CD4-positive, alpha-beta T cell (primary cell): ENCODE measurements at regions of chr17 and their contacts with region 1.

Region 1: GRCh38 chr17:38799378-38800236 is at the start of gene PIP4K2B:
- DNase-seq: peak; percentile 66 to 93 (median 77)
- ATAC-seq: peak; percentile 69
- H3K4me3 ChIP-seq: peak within 1 kb of the TSS; percentile 65
- H3K4me3 Mint-ChIP-seq: peak within 1 kb of the TSS; percentile 92
- H3K27ac ChIP-seq: peak within 1 kb of the TSS; percentile 48 to 77
- H3K27ac Mint-ChIP-seq: peak within 1 kb of the TSS; percentile 90
- H3K4me1 ChIP-seq: peaks cover 26% of the 10 kb centered on the region
- H3K4me1 Mint-ChIP-seq: peaks cover 44% of the 10 kb centered on the region
- H3K27me3 ChIP-seq: no peaks in the 10 kb centered on the region
- H3K27me3 Mint-ChIP-seq: no peaks in the 10 kb centered on the region
- CTCF ChIP-seq: no peak
- total RNA-seq, gene PIP4K2B: 17.0 to 17.2 TPM

Region 2: DNA sequence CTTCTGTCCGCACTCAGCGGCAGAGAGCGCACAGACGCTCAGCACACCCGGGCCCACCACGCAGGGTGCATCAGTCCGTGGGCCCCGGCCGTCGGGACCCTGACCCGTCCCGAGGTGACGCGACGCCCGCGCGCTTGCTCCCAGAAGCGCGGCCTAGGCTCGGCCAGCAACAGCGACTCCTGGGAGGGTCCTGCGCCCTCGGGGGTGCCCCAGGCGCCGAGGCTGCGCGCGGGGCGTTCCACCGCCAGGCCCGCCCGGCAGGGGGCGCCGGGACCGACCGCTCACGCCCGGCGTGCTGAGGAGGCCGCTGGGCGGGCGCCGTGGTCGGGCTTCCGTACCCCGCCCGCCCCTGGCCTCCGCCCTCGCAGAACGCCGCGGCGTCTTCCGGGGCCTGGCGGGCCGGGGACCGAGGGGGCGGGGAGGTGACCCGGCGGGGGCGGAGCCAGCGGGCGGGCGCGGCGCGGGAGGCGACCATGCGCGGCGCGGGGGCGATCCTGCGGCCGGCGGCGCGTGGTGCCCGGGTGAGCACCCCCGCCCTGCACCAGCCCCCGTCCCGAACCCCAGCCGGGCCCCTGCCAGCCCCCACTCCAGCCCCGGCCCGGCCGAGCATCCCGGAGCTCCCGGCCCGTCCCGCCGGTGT is 69.6 kb before region 1 on chr17 and contains the start of gene CISD3:
- CTCF ChIA-PET with region 1: interaction called, 4 read pairs
- POLR2A ChIA-PET with region 1: no interaction called
- intact Hi-C with region 1: loop called in 1 of 2 experiments (anchors 2 kb)
- DNase-seq: peak; percentile 67 to 96 (median 84)
- ATAC-seq: peak; percentile 70
- H3K4me3 ChIP-seq: peak within 1 kb of the TSS; percentile 71
- H3K4me3 Mint-ChIP-seq: peak within 1 kb of the TSS; percentile 99
- H3K27ac ChIP-seq: peak within 1 kb of the TSS; percentile 60 to 80
- H3K27ac Mint-ChIP-seq: peak within 1 kb of the TSS; percentile 89
- H3K4me1 ChIP-seq: peaks cover 89% of the 10 kb centered on the region
- H3K4me1 Mint-ChIP-seq: peaks cover 85% of the 10 kb centered on the region
- H3K27me3 ChIP-seq: no peaks in the 10 kb centered on the region
- H3K27me3 Mint-ChIP-seq: no peaks in the 10 kb centered on the region
- CTCF ChIP-seq: peak; percentile 54
- total RNA-seq, gene CISD3: 4.7 to 5.7 TPM

Region 3: GRCh38 chr17:38824899-38825761 is 25.5 kb after region 1 on chr17 and contains the start of gene CWC25:
- CTCF ChIA-PET with region 1: no interaction called
- POLR2A ChIA-PET with region 1: interaction called, 9 read pairs
- intact Hi-C with region 1: loop called in 1 of 2 experiments (anchors 1 kb)
- DNase-seq: peak; percentile 90 to 100 (median 94)
- ATAC-seq: peak; percentile 81
- H3K4me3 ChIP-seq: peak within 1 kb of the TSS; percentile 66
- H3K4me3 Mint-ChIP-seq: peak within 1 kb of the TSS; percentile 99
- H3K27ac ChIP-seq: peak within 1 kb of the TSS; percentile 94 to 95
- H3K27ac Mint-ChIP-seq: peak within 1 kb of the TSS; percentile 100
- H3K4me1 ChIP-seq: peaks cover 25% of the 10 kb centered on the region
- H3K4me1 Mint-ChIP-seq: peaks cover 37% of the 10 kb centered on the region
- H3K27me3 ChIP-seq: no peaks in the 10 kb centered on the region
- H3K27me3 Mint-ChIP-seq: peaks cover 5% of the 10 kb centered on the region
- CTCF ChIP-seq: no peak
- total RNA-seq, gene CWC25: 63.0 to 63.3 TPM

Region 4: DNA sequence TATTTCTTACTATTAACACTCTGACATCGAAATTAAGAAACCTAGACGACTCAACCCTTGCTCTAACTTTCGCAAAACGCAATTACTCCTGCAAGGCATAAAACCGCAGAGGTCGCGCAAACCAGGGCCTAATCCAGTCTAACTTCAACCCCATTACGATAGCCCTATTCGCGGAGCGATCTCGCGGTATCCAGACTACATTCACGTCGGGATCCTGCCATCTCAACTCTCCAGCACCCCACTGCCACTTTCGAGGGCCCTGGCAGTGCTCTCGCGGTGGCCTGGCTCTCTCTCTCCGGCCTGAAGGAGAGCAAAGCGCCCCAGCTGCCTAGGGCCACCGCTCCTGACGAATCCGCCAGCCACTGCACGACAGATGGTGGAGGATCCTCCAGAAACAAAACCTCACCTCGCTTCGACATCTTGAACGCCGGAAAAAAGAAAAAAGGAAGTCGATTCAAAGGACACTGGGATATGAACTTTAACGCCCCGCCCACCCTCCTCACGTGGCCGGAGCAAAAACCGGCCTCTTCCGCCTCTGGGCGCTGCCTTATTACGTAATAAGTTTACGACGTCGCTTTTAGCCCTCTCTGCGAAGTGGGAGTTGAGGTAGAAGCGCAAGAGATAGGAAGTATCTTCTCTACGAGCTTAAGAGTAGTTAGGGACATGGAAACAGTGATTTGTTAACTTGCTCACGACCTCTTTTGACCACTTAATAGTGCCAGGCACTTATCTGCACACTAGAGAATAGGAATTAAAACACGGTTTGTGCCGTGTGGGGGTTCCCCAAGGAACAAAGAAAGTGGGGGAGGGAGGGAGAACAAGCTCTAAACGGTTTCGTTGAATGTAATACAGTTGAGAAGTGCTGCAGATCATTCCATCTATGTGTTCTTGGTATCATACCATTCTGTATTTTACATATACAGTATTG is 53.9 kb after region 1 on chr17 and contains the start of gene RPL23:
- CTCF ChIA-PET with region 1: no interaction called
- POLR2A ChIA-PET with region 1: interaction called, 14 read pairs
- intact Hi-C with region 1: loop called in 1 of 2 experiments (anchors 1 kb)
- DNase-seq: peak; percentile 77 to 97 (median 86)
- ATAC-seq: peak; percentile 80
- H3K4me3 ChIP-seq: peak within 1 kb of the TSS; percentile 67
- H3K4me3 Mint-ChIP-seq: peak within 1 kb of the TSS; percentile 90
- H3K27ac ChIP-seq: peak within 1 kb of the TSS; percentile 86 to 92
- H3K27ac Mint-ChIP-seq: peak within 1 kb of the TSS; percentile 96
- H3K4me1 ChIP-seq: peaks cover 29% of the 10 kb centered on the region
- H3K4me1 Mint-ChIP-seq: peaks cover 39% of the 10 kb centered on the region
- H3K27me3 ChIP-seq: no peaks in the 10 kb centered on the region
- H3K27me3 Mint-ChIP-seq: no peaks in the 10 kb centered on the region
- CTCF ChIP-seq: no peak
- total RNA-seq, gene RPL23: 2,293 to 2,296 TPM

Region 5: DNA sequence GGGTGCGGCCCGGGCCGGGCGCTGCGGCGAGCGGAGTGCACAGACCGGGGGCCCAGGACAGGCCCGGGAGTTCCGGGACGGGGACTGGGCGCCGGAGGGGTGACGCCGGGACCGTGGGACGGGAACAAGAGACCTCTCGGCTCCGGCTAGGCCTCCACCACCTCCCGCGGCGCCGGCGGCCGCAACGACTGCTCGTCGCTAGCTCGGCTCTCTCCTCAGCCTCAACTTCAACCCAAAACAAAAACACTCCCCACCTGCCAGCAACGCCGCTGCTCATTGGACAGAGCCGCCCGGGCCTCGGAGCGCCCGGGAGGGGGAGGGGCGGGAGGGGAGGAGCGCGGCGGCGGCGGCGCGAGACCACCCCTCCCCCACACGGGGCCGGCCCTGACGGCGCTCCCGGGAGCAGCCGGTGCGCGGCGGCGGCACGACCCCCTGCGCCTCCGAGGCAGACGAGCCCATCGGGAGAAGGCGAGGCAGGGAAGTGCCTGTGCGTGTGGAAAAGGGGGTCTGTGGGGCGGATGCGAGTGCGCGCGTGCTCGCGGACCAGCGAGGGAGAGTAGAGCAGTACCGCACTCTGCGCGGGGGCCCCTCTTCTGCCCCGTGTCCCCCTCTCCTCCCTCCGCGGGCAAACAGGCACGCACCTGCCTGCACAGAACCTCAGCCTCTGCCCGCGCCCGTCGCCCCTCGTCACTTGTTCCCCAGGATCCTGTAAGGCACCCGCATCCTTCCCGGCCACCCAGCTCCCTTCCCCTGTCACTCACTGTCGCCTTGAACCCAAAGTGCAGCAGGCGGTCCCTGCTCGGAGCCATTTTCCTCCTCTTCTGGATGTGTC is 602.0 kb after region 1 on chr17 and contains the start of gene FBXL20:
- CTCF ChIA-PET with region 1: no interaction called
- POLR2A ChIA-PET with region 1: no interaction called
- intact Hi-C with region 1: loop called in 1 of 2 experiments (anchors 10 kb)
- DNase-seq: peak; percentile 89 to 96 (median 94)
- ATAC-seq: peak; percentile 77
- H3K4me3 ChIP-seq: peak within 1 kb of the TSS; percentile 97
- H3K4me3 Mint-ChIP-seq: peak within 1 kb of the TSS; percentile 100
- H3K27ac ChIP-seq: peak within 1 kb of the TSS; percentile 68 to 72
- H3K27ac Mint-ChIP-seq: peak within 1 kb of the TSS; percentile 98
- H3K4me1 ChIP-seq: peaks cover 13% of the 10 kb centered on the region
- H3K4me1 Mint-ChIP-seq: peaks cover 40% of the 10 kb centered on the region
- H3K27me3 ChIP-seq: no peaks in the 10 kb centered on the region
- H3K27me3 Mint-ChIP-seq: no peaks in the 10 kb centered on the region
- CTCF ChIP-seq: no peak
- total RNA-seq, gene FBXL20: 16.7 to 17.1 TPM